ENCODE measurements at regions of chr11 and their contacts with region 1.

Region 1: DNA sequence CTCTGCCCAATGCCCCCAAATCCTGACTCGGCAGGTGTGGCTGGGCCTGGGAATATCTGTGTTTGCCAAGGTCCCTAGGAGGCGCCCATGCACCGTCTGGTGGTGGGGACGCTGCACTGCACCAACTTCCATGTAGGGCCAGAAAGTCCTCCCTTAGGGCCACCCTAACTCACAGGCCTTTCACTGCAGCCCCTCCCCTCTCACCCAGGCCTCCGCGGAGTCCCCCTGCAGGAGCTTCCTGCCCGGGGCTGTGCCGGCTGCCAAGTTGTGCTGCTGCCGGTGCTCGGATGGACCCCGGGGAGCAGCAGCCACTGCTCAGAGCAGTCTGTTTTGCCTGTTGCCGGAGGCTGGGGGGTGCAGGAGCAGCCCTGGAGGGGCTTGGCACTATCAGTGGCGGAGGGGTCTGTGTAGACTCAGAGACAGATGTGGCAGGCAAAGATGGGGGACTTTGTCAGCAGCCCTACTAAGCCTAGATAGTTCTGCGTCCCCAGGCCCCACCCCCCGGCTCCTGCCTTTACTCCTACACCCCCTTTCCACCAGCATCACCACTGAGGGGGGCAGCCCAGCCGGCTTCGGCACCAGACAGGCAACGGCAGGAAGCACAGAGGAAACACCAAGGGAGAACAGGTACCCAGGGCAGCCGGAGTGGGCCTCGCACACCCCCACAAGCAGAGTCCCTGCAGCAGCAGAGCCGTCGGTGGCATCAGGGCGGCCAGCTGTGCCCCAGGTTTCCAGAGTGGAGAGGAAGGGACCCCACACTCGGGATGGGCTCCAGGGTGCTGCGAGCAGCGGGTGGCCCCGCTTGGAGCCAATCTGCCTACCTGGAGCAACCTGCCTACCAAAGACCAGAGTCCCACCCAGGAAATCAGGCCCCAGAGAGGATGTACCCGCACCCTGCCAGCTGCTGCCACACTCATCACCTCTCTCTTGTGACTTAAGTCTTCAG is 124.3 kb downstream of the TRIM29 start:
- DNase-seq: peak; percentile 87
- ATAC-seq: peak; percentile 98
- H3K4me3 Mint-ChIP-seq: 0 out of 2 replicates have a peak overlapping the region, but pooled peaks have one; percentile 14
- H3K27ac Mint-ChIP-seq: no peak overlapping the region
- H3K4me1 Mint-ChIP-seq: peaks cover 52% of the 10 kb centered on the region
- H3K27me3 Mint-ChIP-seq: peaks cover 22% of the 10 kb centered on the region
- CTCF ChIP-seq: peak; percentile 68

Region 2: GRCh38 chr11:119999220-119999619 is 14.4 kb before region 1 on chr11:
- CTCF ChIA-PET with region 1: interaction called, 27 read pairs
- POLR2A ChIA-PET with region 1: no interaction called
- DNase-seq: peak; percentile 41
- ATAC-seq: peak; percentile 61
- H3K4me3 Mint-ChIP-seq: no peak overlapping the region
- H3K27ac Mint-ChIP-seq: no peak overlapping the region
- H3K4me1 Mint-ChIP-seq: peaks cover 26% of the 10 kb centered on the region
- H3K27me3 Mint-ChIP-seq: peaks cover 6% of the 10 kb centered on the region; the same call in 1 of the 2 replicates
- CTCF ChIP-seq: no peak

Region 3: DNA sequence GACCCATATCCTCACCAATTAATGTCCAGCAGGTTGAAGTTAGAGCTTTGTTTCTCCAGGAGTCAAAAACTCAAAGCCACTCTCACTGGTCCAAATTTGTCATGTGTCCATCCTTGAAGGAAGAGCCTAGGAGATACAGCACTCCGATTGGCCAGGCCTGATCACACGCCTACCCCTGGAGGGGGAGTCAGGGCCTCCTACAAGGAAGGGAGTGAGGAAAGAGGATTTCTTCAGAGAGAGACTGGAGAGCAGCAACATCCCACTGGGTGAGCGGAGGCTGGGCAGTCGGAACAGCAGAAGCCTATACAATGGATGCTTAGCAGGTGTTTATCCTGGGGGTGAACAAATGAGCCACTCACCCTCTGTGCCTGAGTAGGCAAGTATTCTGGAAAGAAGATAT is 10.4 kb after region 1 on chr11:
- CTCF ChIA-PET with region 1: interaction called, 29 read pairs
- POLR2A ChIA-PET with region 1: no interaction called
- DNase-seq: no peak
- ATAC-seq: peak; percentile 42
- H3K4me3 Mint-ChIP-seq: no peak overlapping the region; the same call in 1 of the 2 replicates
- H3K27ac Mint-ChIP-seq: 0 out of 2 replicates have a peak overlapping the region, but pooled peaks have one; percentile 63
- H3K4me1 Mint-ChIP-seq: peaks cover 30% of the 10 kb centered on the region
- H3K27me3 Mint-ChIP-seq: peaks cover 12% of the 10 kb centered on the region
- CTCF ChIP-seq: no peak

Region 4: DNA sequence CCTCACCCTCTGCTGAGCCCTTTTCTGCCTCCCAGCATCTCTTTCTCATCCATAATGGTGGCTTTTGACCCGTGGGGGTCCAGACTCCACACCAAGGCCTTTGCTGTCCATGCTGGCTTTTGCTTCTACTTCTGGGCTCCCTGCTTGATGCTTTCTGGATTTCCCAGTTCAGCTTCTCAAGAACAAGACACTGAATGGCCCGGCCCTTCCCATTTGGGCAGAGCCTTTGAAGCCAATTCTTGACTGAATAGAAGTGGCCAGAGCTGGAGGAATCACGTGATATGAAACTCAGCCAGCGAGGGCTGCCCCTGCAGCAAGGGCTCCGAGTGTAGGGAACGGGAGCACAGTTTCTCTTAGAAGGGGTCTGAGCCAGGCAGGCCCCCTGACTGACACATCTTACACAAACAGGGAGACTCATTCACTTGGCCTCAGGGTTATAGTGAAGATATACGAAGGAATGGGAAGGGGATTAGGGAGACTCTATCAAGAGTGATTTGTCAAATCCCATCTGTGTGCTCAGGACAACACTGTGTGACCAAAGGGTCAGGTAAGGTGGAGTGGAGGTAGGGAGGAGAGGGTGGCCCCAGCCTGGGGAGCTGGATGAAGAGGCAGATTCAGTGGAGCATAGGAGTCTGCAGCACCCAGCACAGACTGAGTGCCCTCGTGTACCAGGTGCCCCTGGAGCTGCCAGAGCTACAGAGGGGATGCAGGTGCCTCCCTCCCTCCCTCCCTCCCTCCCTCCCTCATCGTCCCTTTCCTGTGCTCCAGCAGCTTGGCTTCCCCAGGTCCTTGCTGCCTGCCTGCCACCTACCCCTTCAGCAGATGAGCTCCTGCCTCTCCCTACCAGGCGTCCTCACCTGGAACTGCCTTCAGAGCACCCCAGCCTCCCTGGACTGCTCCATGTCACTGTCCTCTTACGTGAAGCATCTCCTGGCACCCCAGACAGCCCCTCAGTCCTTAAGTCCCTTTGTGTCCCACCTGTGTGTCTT is 18.3 kb after region 1 on chr11:
- CTCF ChIA-PET with region 1: interaction called, 11 read pairs
- POLR2A ChIA-PET with region 1: no interaction called
- DNase-seq: no peak
- ATAC-seq: no peak
- H3K4me3 Mint-ChIP-seq: no peak overlapping the region
- H3K27ac Mint-ChIP-seq: no peak overlapping the region
- H3K4me1 Mint-ChIP-seq: peaks cover 20% of the 10 kb centered on the region
- H3K27me3 Mint-ChIP-seq: peaks cover 16% of the 10 kb centered on the region
- CTCF ChIP-seq: no peak

Region 5: DNA sequence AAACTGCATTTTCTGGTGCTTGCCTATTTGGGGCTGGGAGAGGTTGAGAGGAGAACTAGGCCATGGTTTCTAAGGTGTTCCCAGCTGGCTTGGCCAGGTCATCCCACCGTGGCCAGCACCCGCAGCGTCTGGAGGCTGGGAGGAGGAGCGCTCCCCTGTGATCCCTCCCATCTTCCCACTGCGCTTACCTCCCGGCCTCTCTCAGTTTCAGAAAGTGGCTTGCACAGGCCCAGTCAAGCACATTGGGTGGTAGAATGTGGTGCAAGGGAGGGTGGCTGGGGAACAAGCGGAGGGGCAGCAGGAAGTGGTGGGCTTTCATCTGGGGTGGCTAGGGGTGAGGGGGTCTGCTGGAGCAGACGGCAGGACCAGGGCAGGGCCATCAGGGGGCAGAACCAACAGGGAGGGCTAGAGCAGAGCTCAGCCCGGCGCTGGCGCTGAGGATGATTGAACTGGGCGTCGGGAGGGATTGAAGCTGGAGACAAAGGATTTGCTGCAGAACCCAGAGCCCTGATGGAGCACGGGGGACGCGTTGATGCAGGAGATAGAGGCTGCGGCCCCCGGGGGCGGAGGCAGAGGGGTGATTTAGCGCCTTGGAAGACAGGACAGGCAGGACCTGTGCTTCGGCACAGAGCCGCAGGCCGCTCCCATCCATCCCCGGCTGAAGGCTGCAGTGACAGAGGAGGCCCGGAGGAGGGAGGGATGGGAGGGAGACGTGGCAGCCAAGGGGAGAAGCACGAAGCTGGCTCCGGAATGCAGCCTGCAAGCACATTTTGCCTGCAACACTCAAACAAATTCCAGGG is 48.4 kb after region 1 on chr11:
- CTCF ChIA-PET with region 1: interaction called, 32 read pairs
- POLR2A ChIA-PET with region 1: no interaction called
- DNase-seq: peak; percentile 57
- ATAC-seq: peak; percentile 49
- H3K4me3 Mint-ChIP-seq: no peak overlapping the region
- H3K27ac Mint-ChIP-seq: no peak overlapping the region
- H3K4me1 Mint-ChIP-seq: peaks cover 52% of the 10 kb centered on the region
- H3K27me3 Mint-ChIP-seq: peaks cover 6% of the 10 kb centered on the region
- CTCF ChIP-seq: no peak

Region 6: GRCh38 chr11:120079750-120080490 is 66.3 kb after region 1 on chr11:
- CTCF ChIA-PET with region 1: interaction called, 65 read pairs
- POLR2A ChIA-PET with region 1: no interaction called
- DNase-seq: peak; percentile 68
- ATAC-seq: peak; percentile 89
- H3K4me3 Mint-ChIP-seq: no peak overlapping the region
- H3K27ac Mint-ChIP-seq: no peak overlapping the region
- H3K4me1 Mint-ChIP-seq: peaks cover 7% of the 10 kb centered on the region
- H3K27me3 Mint-ChIP-seq: peaks cover 39% of the 10 kb centered on the region
- CTCF ChIP-seq: peak; percentile 81

Region 7: DNA sequence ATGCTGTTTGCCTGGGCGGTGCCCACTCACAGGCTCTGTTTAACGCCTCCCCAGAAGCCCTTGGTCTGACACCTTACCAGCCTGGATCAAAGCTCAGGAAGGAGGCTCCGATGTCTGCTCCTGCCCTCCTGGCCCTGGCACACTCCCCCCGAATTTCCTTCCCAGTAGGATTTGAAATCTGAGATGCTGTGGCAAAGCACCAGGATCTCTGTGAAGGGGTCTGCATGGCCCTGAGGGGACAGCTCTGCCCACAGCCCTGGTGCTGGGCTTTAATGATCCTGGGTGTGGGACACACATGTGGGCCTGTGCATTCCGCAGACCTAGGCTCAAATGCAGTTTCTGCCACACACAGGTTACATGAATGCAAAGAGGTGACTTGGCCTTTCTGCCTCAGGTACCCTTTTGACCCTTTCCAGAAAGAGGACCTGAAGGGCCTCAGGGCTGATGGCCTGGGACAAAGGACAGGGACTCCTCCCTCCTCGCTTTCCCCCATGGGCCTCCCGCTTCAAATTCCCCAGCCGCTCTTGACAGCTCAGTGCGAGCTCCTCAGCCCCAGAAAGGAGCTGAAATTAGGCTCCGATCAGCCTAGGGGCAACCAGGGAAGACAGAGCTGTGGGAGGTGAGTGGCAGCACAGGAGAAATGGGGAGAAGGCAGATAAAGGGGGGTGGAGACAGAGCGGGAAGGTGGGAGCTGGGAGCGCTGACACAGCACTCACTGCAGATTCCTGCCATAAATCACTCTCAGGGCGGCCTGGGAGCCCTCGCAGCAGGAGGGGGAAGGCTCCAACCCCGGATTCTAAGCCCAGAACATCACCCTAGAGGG is 83.0 kb after region 1 on chr11:
- CTCF ChIA-PET with region 1: interaction called, 10 read pairs
- POLR2A ChIA-PET with region 1: no interaction called
- DNase-seq: no peak
- ATAC-seq: peak; percentile 65
- H3K4me3 Mint-ChIP-seq: peak overlapping the region; percentile 34; the same call in 1 of the 2 replicates
- H3K27ac Mint-ChIP-seq: no peak overlapping the region
- H3K4me1 Mint-ChIP-seq: peaks cover 21% of the 10 kb centered on the region
- H3K27me3 Mint-ChIP-seq: peaks cover 9% of the 10 kb centered on the region
- CTCF ChIP-seq: no peak

Measured in WTC11 (cell line).